ENCODE measurements at regions of chr3 and their contacts with region 1.

Region 1: DNA sequence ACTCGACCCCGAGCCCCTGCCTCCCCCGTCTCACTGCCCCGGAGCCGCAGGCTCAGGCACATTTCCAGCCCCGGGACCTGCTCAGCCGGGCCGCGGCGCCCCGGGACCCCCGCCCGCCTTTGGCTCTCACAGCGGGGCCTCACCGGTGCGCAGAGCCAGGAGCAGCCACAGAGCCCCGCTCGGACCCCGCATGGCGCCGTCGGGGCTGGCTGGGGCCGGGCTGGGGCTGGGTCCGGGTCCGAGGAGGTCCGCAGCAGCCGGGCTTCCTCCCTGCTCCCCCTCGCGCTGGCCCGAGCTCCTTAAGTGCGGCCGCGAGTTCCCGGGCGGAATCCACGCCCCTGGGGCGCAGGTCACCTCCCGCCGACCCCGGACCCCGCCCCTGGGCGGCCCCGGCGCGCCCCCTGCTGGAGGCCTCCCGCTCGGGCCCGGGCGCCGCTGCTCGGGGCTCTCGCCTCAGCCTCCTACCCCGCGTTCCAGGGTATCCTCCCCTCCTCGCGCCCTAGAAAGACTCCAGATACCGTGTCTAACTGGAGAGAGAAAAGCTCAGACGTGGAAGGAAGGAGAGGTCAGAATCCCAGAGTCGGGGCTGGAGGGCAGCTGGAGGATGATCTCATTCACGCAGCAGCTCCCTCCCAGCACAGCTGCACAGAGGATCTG is at the start of gene MELTF:
- DNase-seq: peak; percentile 75
- ATAC-seq: peak; percentile 92
- H3K4me3 Mint-ChIP-seq: peak within 1 kb of the TSS; percentile 70
- H3K27ac Mint-ChIP-seq: peak within 1 kb of the TSS; percentile 43
- H3K4me1 Mint-ChIP-seq: peaks cover 14% of the 10 kb centered on the region
- H3K27me3 Mint-ChIP-seq: peaks cover 4% of the 10 kb centered on the region
- total RNA-seq, gene MELTF: 7.6 to 8.2 TPM

Region 2: GRCh38 chr3:197002701-197003454 is 26.8 kb before region 1 on chr3:
- CTCF ChIA-PET with region 1: interaction called, 41 read pairs
- POLR2A ChIA-PET with region 1: interaction called, 3 read pairs
- DNase-seq: peak; percentile 71
- ATAC-seq: peak; percentile 85
- H3K4me3 Mint-ChIP-seq: no peak overlapping the region
- H3K27ac Mint-ChIP-seq: no peak overlapping the region
- H3K4me1 Mint-ChIP-seq: peaks cover 12% of the 10 kb centered on the region
- H3K27me3 Mint-ChIP-seq: peaks cover 2% of the 10 kb centered on the region

Region 3: GRCh38 chr3:197041875-197042488 is 12.3 kb after region 1 on chr3:
- CTCF ChIA-PET with region 1: interaction called, 19 read pairs
- POLR2A ChIA-PET with region 1: interaction called, 3 read pairs
- DNase-seq: no peak
- ATAC-seq: no peak
- H3K4me3 Mint-ChIP-seq: no peak overlapping the region
- H3K27ac Mint-ChIP-seq: no peak overlapping the region
- H3K4me1 Mint-ChIP-seq: no peaks in the 10 kb centered on the region
- H3K27me3 Mint-ChIP-seq: no peaks in the 10 kb centered on the region

Region 4: GRCh38 chr3:197050511-197050910 is 20.9 kb after region 1 on chr3:
- CTCF ChIA-PET with region 1: interaction called, 10 read pairs
- POLR2A ChIA-PET with region 1: no interaction called
- DNase-seq: no peak
- ATAC-seq: no peak
- H3K4me3 Mint-ChIP-seq: no peak overlapping the region
- H3K27ac Mint-ChIP-seq: no peak overlapping the region
- H3K4me1 Mint-ChIP-seq: no peaks in the 10 kb centered on the region
- H3K27me3 Mint-ChIP-seq: no peaks in the 10 kb centered on the region

Region 5: DNA sequence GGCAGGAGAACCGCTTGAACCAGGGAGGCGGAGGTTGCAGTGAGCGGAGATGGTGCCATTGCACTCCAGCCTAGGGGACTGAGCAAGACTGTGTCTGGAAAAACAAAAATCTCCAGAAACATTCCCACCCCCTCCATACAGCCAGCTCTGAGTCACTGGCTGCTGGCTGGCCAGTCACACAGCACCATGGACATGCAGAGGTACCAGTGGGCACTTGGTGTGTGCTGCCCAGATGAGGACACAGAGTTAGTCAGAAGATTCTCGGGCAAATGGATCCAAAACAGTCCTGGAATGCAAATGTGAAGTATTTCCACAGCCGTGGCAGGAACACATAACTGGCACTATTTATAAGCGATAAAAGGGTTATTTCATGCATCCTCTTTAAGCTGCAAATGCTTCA is 481.5 kb after region 1 on chr3:
- CTCF ChIA-PET with region 1: no interaction called
- POLR2A ChIA-PET with region 1: no interaction called
- DNase-seq: no peak
- ATAC-seq: no peak
- H3K4me3 Mint-ChIP-seq: no peak overlapping the region
- H3K27ac Mint-ChIP-seq: no peak overlapping the region
- H3K4me1 Mint-ChIP-seq: peaks cover 16% of the 10 kb centered on the region
- H3K27me3 Mint-ChIP-seq: no peaks in the 10 kb centered on the region